Ovary (tissue), 10 donors: ENCODE measurements at regions of chr15 and their contacts with region 1.

Region 1: GRCh38 chr15:89430530-89431341 is 65.6 kb downstream of the RHCG start:
- DNase-seq: peak; percentile 68 to 91 (median 83)
- H3K4me3 ChIP-seq: peak overlapping the region; percentile 34
- H3K27ac ChIP-seq: no peak overlapping the region
- H3K4me1 ChIP-seq: no peaks in the 10 kb centered on the region
- H3K27me3 ChIP-seq: no peaks in the 10 kb centered on the region
- CTCF ChIP-seq: peak; percentile 90 to 96 (median 93)
- EP300 ChIP-seq: no peak
- POLR2A ChIP-seq: no peak

Region 2: DNA sequence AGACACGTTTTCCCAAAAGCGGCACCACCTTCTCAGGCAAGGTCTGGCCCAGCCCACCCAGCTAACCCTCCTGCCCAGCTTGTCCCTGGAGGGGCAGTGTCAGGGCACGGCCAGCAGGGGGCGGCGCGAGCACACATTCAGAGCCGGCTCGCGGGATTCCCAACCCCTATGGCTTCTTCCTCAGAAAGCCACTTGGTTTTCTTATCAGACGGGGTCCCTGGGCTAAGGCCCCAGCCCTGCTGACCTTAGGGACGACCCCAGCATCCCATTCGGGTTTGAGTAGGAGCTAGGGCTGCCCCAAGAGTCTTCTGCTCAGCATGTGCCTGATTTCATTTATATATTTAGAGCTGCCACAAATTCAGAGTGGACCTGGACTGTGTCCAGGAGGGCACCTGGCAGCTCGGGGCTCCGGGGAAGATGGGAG is 223.8 kb before region 1 on chr15:
- intact Hi-C with region 1: loop called in 3 of 4 experiments (anchors 10 kb)
- DNase-seq: peak; percentile 42 to 79 (median 70)
- H3K4me3 ChIP-seq: no peak overlapping the region
- H3K27ac ChIP-seq: no peak overlapping the region
- H3K4me1 ChIP-seq: no peaks in the 10 kb centered on the region
- H3K27me3 ChIP-seq: no peaks in the 10 kb centered on the region
- CTCF ChIP-seq: peak; percentile 78 to 89 (median 83)
- EP300 ChIP-seq: no peak
- POLR2A ChIP-seq: no peak

Region 3: DNA sequence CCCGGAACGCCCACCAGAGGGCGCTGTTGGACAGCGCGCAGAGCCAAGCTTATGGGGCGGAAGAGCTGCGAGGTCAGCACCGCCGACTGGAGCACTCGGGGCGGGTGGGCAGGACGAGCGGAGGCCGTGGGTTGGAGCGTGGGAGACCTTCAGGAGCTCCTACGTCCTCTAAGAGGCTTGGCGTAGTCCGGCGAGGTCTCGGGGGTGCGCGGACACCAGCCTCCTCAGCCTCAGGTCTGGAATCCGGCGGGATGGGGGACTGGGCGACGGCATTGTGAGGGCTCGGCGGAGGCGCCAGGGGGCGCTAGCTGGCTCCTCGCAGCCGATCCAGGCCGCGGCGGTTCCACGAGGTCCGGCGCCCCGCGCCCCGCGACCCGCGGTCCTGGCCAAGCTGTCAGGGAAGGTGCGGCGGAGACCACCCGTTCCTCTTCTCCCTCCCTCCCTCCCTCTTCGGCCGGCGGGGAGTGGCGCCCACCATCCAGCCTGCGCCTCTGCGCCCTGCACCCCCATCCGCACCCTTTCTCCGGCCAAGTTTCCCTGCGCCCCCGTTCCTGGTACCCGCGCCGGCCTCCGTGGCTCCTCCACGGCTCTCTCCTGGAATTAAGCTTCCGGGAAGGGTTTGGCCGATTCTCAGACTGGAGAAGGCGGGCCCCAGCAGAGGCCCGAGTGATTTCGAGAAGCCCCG is 71.8 kb before region 1 on chr15:
- intact Hi-C with region 1: loop called (anchors 2 kb)
- DNase-seq: peak; percentile 53 to 86 (median 73)
- H3K4me3 ChIP-seq: peak overlapping the region; percentile 43
- H3K27ac ChIP-seq: no peak overlapping the region
- H3K4me1 ChIP-seq: peaks cover 6% of the 10 kb centered on the region
- H3K27me3 ChIP-seq: no peaks in the 10 kb centered on the region
- CTCF ChIP-seq: peak; percentile 92 to 99 (median 93)
- EP300 ChIP-seq: no peak
- POLR2A ChIP-seq: no peak

Region 4: DNA sequence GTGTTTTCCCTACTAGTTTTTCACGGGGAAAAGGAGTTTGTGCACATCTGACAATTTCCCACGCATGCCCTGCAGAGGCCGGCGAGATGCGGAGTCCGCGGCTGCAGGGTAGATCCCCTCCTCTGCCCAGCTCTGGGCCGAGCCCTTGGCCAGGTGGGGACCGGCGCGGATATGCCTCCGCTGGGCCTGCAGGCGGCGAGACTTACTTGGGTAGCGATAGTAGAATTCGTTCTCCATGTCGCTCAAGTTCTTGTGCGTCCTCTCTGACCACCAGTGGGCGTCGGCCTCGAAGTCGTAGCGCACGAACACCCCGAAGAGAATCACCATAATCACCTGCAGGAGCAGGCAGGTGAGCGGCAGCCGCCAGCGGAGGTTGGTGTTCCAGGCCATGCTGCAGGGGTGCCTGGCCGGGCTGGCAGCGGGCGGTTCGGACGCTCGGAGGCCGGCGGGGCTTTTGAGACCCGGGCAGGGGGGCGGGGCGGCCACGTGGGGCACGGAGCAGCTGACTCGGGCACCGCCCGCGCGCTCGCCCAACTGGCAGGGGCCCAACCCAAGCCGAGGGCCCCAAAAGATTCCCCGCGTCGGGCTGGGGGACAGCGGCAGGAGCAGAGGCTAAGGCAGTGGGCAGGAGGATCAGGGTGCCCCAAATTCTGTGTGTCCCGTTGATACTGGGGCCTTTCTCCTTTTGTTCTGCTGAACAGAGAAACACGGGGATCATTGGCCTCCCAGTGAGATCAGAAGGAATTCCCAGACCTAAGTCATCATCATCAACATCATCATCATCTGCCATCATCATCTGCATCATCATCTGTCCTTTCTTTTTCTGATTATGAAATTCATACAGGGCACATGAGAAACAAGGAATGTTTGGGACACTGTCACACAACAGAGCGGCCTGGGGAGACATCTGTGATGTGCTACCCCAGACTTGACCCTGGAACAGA is 65.7 kb after region 1 on chr15 and contains the start of gene RHCG:
- intact Hi-C with region 1: no loop called
- DNase-seq: no peak
- H3K4me3 ChIP-seq: no peak within 1 kb of the TSS
- H3K27ac ChIP-seq: no peak within 1 kb of the TSS
- H3K4me1 ChIP-seq: peaks cover 4% of the 10 kb centered on the region
- H3K27me3 ChIP-seq: no peaks in the 10 kb centered on the region
- CTCF ChIP-seq: no peak
- EP300 ChIP-seq: no peak
- POLR2A ChIP-seq: no peak
- total RNA-seq, gene RHCG: 0.23 to 0.67 TPM in 2 of 7 donors, not detected in the others